Activated T-helper 2 cell treated with anti-CD3 and anti-CD28 coated beads, Interferon-gamma antibody, Interleukin-2, Interleukin-4, amounts not matched to agents 10 μg/mL and 5 μg/mL and 100 μg/mL, durations not matched to agents 14 hours and 24 hours and 36 hours (primary cell): ENCODE measurements at regions of chr6 and their contacts with region 1.

Region 1: GRCh38 chr6:149648148-149649145 is at the start of gene KATNA1:
- DNase-seq: peak; percentile 87
- H3K4me3 Mint-ChIP-seq: peak within 1 kb of the TSS; percentile 91
- H3K27ac Mint-ChIP-seq: peak within 1 kb of the TSS; percentile 81
- H3K4me1 Mint-ChIP-seq: peaks cover 24% of the 10 kb centered on the region
- H3K27me3 Mint-ChIP-seq: no peaks in the 10 kb centered on the region
- total RNA-seq, gene KATNA1: 18.9 and 20.8 TPM in 2 replicates

Region 2: GRCh38 chr6:149545754-149546528 is 102.5 kb before region 1 on chr6 and contains the start of gene PPIL4:
- intact Hi-C with region 1: loop called (anchors 5 kb)
- DNase-seq: peak; percentile 95
- H3K4me3 Mint-ChIP-seq: peak within 1 kb of the TSS; percentile 96
- H3K27ac Mint-ChIP-seq: peak within 1 kb of the TSS; percentile 97
- H3K4me1 Mint-ChIP-seq: peaks cover 36% of the 10 kb centered on the region
- H3K27me3 Mint-ChIP-seq: peaks cover 6% of the 10 kb centered on the region
- total RNA-seq, gene PPIL4: 20.4 and 20.5 TPM in 2 replicates

Region 3: DNA sequence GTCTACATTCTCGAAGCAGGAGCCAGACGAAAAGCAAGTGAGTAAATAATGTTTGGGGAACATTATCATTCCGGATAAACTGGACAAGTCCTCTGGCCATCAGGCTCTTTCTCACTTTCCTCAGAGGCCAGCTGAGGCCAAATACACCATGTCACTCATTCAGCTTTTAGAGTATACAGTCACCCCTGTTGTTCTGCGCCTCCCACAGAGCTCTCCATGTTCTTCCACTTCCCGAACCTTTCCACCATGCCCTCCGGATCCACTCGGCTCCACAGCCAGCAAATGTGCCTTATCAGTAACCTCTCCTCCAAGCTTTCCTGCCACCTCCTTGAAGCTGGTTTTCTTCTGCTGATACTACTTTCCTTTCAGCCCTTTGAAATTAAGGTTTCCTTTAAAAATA is 37.8 kb after region 1 on chr6:
- intact Hi-C with region 1: loop called (anchors 2 kb)
- DNase-seq: no peak
- H3K4me3 Mint-ChIP-seq: no peak overlapping the region
- H3K27ac Mint-ChIP-seq: peak overlapping the region; percentile 65
- H3K4me1 Mint-ChIP-seq: peaks cover 24% of the 10 kb centered on the region
- H3K27me3 Mint-ChIP-seq: no peaks in the 10 kb centered on the region

Region 4: DNA sequence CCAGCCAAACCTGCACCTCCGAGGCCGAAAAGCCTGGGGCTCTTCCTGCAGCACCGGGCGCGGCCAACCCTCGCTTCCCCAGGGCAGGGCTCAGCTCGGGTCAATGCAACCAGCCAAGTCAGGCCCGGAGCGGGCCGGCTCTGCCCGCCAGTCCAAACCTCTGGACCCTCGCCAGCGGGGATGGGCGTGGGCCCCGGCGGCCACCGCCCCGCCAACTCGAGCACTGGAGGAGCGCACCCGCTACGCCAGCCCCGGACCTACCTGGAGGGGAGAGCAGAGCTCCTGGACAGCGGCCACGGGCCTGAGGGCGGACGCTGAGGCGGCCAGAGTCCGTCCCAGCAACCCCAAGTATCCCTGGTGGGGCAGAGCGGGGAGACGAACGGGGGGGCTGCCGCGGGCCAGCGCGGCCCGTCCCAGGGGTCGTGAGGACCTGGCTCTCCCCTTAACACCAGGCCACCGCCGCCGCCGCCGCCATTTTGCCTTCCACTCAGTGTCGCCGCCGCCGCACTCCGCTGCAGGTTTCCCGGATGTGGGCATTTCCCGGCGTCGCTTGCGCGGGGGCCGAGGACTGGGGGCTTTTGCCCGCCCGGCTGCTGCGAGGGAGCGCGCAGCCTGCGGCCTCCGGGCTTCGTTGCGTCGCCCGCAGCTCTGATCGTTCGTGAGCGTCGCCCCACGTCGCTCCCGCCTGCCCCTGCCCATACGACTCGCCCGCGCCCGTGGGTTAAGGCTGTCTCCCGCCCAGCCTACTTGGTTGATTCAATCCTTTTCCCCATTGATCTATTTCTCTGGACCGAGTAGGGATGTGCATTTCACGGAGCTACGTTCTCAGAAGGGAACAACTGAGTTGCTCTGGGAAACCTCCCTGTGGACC is 69.4 kb after region 1 on chr6 and contains the start of gene LATS1:
- intact Hi-C with region 1: loop called (anchors 2 kb)
- DNase-seq: peak; percentile 88
- H3K4me3 Mint-ChIP-seq: peak within 1 kb of the TSS; percentile 96
- H3K27ac Mint-ChIP-seq: peak within 1 kb of the TSS; percentile 97
- H3K4me1 Mint-ChIP-seq: peaks cover 31% of the 10 kb centered on the region
- H3K27me3 Mint-ChIP-seq: no peaks in the 10 kb centered on the region
- total RNA-seq, gene LATS1: 27.8 and 28.4 TPM in 2 replicates